Adrenal gland (tissue), 19 donors: ENCODE measurements at regions of chr7 and their contacts with region 1.

Region 1: DNA sequence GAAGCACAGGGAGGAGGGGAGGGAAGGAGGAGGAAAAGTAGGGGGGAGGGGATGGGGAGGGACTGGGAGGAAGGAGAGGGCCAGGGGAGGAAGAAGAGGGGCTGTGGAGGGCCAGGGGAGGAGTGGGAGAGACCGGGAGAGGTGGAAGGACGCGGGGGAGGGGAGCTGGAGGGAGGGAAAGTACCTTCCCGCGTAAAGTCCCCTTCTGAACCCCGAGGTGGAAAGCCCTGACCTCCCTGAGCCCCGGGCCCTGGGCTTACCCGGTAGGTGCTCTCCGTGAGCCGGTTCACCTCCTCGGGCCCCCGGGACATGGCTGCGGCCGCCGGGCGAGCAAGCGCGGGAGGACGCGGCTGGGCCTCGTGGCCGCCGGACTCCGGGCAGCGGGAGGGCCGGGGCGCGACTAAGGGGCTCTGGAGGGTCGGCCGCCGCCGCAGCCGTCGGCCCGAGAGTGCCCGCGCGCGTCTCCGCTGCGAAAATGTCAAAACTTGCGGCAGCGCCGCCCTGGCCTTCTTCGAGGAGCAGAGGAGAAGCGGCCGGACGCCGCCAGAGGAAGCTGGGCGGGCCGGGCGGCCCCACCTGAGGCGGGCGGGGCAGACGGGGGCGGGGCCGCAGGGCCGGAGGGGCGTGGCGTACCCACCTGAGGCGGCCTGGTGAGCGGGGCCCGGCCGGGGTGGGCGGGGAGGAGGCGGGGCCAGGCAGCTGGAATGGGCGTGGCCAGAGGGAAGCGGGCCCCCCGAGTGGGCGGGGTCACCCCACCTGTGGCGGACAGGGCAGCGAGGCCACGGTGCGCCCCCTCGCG is at the start of gene BAIAP2L1:
- DNase-seq: peak; percentile 89 to 97 (median 94)
- H3K4me3 ChIP-seq: peak within 1 kb of the TSS in 3 of 4 donors; percentile 40 to 93 (median 61)
- H3K27ac ChIP-seq: peak within 1 kb of the TSS; percentile 43 to 85 (median 71)
- H3K4me1 ChIP-seq: peaks cover 0 to 18% of the 10 kb centered on the region in 2 donors
- H3K27me3 ChIP-seq: no peaks in the 10 kb centered on the region
- CTCF ChIP-seq: peak in 1 of 6 experiments; percentile 43
- POLR2A ChIP-seq: peak in 1 of 2 donors; percentile 68
- total RNA-seq, gene BAIAP2L1: 16.9 to 37.5 (median 25.4) TPM

Region 2: GRCh38 chr7:98294796-98295382 is 105.9 kb before region 1 on chr7:
- intact Hi-C with region 1: loop called (anchors 2 to 5 kb)
- DNase-seq: peak in 6 of 7 donors; percentile 67 to 76 (median 74)
- H3K4me3 ChIP-seq: no peak overlapping the region
- H3K27ac ChIP-seq: peak overlapping the region in 2 of 5 donors; percentile 3 to 22
- H3K4me1 ChIP-seq: no peaks in the 10 kb centered on the region
- H3K27me3 ChIP-seq: no peaks in the 10 kb centered on the region
- CTCF ChIP-seq: peak; percentile 54 to 73 (median 68)
- POLR2A ChIP-seq: no peak